ENCODE measurements at regions of chr12 and their contacts with region 1.

Region 1: DNA sequence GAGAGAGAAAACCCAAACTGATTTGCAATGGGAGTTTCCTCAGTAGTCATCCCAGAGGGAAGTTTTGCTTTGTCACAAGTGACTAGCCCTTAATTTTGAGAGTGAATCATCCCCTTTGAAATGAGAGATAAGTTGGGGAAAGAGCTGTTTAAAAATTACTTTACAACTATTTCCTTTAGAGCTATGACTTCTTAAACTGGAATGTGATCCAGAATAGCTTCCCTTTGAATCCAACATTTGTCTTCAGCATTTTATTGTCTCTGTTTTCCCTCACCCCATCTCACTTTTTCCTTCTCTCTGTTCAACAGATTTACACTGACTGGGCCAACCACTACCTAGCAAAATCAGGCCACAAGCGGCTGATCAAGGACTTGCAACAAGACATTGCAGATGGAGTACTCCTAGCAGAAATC is 109.3 kb downstream of the NAV3 start:
- DNase-seq: peak; percentile 90
- ATAC-seq: peak; percentile 89
- H3K4me3 ChIP-seq: peak overlapping the region; percentile 56
- H3K27ac ChIP-seq: peak overlapping the region; percentile 68
- H3K4me1 ChIP-seq: peaks cover 46% of the 10 kb centered on the region
- H3K27me3 ChIP-seq: no peaks in the 10 kb centered on the region
- CTCF ChIP-seq: no peak

Region 2: DNA sequence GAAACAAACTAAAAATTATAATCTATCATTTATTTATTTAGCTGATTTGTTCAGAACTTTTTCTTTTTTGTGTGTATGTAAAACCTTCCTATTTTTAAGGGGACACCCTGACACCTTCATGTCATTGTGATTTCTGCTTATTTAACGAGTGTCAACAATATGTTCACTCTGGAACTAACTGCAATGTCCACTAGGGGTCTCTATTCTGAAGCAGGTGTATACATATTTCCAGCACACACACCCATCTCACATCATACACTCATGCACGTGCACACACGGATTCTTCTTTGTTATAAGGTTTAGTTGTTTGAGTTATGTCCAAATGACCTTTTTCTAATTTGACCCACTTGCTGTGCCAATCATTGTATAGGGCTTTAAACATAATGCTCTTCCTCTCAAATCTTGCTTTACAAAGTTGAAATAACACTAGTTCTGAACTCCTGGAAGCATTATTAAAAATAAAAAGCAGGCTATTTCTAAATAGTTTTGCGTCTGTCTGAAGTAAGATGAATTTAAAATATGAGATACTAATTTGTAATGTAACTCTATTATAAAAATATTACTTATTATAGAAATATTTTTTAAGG is 890.2 kb before region 1 on chr12:
- CTCF ChIA-PET with region 1: no interaction called
- POLR2A ChIA-PET with region 1: no interaction called
- intact Hi-C with region 1: loop called (anchors 10 kb)
- DNase-seq: peak; percentile 83
- ATAC-seq: peak; percentile 95
- H3K4me3 ChIP-seq: no peak overlapping the region
- H3K27ac ChIP-seq: no peak overlapping the region
- H3K4me1 ChIP-seq: no peaks in the 10 kb centered on the region
- H3K27me3 ChIP-seq: no peaks in the 10 kb centered on the region
- CTCF ChIP-seq: peak; percentile 89

Region 3: GRCh38 chr12:77855548-77855947 is 84.5 kb before region 1 on chr12:
- CTCF ChIA-PET with region 1: no interaction called
- POLR2A ChIA-PET with region 1: no interaction called
- intact Hi-C with region 1: no loop called
- DNase-seq: peak; percentile 33
- ATAC-seq: peak; percentile 43; the same call in 1 of the 2 replicates
- H3K4me3 ChIP-seq: no peak overlapping the region
- H3K27ac ChIP-seq: no peak overlapping the region
- H3K4me1 ChIP-seq: no peaks in the 10 kb centered on the region
- H3K27me3 ChIP-seq: peaks cover 6% of the 10 kb centered on the region; the same call in 1 of the 2 replicates
- CTCF ChIP-seq: no peak

Region 4: GRCh38 chr12:78120866-78121560 is 181.0 kb after region 1 on chr12:
- CTCF ChIA-PET with region 1: no interaction called
- POLR2A ChIA-PET with region 1: no interaction called
- intact Hi-C with region 1: loop called (anchors 5 kb)
- DNase-seq: peak; percentile 64
- ATAC-seq: peak; percentile 49; the same call in 1 of the 2 replicates
- H3K4me3 ChIP-seq: no peak overlapping the region
- H3K27ac ChIP-seq: no peak overlapping the region
- H3K4me1 ChIP-seq: peaks cover 8% of the 10 kb centered on the region
- H3K27me3 ChIP-seq: no peaks in the 10 kb centered on the region
- CTCF ChIP-seq: peak; percentile 77

Measured in PC-3 (cell line).